Naive thymus-derived CD8-positive, alpha-beta T cell (primary cell): ENCODE measurements at regions of chr12 and their contacts with region 1.

Region 1: GRCh38 chr12:56688129-56688845 is at the start of gene PTGES3:
- DNase-seq: peak; percentile 95 to 99 (median 97)
- ATAC-seq: peak; percentile 59 to 63
- H3K4me3 Mint-ChIP-seq: peak within 1 kb of the TSS; percentile 94 to 100 (median 99)
- H3K27ac Mint-ChIP-seq: peak within 1 kb of the TSS; percentile 97 to 100 (median 98)
- H3K4me1 Mint-ChIP-seq: peaks cover 18 to 41% (median 36%) of the 10 kb centered on the region in 4 donors
- H3K27me3 Mint-ChIP-seq: peaks cover 0 to 2% (median 0%) of the 10 kb centered on the region in 5 donors
- polyA plus RNA-seq, gene PTGES3: 229 to 236 (median 234) TPM

Region 2: GRCh38 chr12:56636675-56637540 is 51.4 kb before region 1 on chr12:
- POLR2A ChIA-PET with region 1: interaction called, 218 read pairs
- DNase-seq: peak; percentile 94 to 99 (median 98)
- ATAC-seq: peak; percentile 64 to 80
- H3K4me3 Mint-ChIP-seq: peak overlapping the region; percentile 84 to 99 (median 96)
- H3K27ac Mint-ChIP-seq: peak overlapping the region; percentile 90 to 100 (median 98)
- H3K4me1 Mint-ChIP-seq: peaks cover 35 to 64% (median 54%) of the 10 kb centered on the region in 4 donors
- H3K27me3 Mint-ChIP-seq: no peaks in the 10 kb centered on the region

Region 3: GRCh38 chr12:56645717-56646446 is 42.4 kb before region 1 on chr12 and contains the start of gene ATP5F1B:
- POLR2A ChIA-PET with region 1: interaction called, 63 read pairs
- DNase-seq: peak; percentile 75 to 97 (median 89)
- ATAC-seq: peak; percentile 93 to 97
- H3K4me3 Mint-ChIP-seq: peak within 1 kb of the TSS; percentile 79 to 98 (median 95)
- H3K27ac Mint-ChIP-seq: peak within 1 kb of the TSS; percentile 90 to 100 (median 98)
- H3K4me1 Mint-ChIP-seq: peaks cover 11 to 42% (median 39%) of the 10 kb centered on the region in 4 donors
- H3K27me3 Mint-ChIP-seq: no peaks in the 10 kb centered on the region
- polyA plus RNA-seq, gene ATP5F1B: 724 to 879 (median 771) TPM

Region 4: GRCh38 chr12:56661560-56661959 is 26.7 kb before region 1 on chr12:
- POLR2A ChIA-PET with region 1: interaction called, 10 read pairs
- DNase-seq: no peak
- ATAC-seq: peak in 1 of 2 donors; percentile 33
- H3K4me3 Mint-ChIP-seq: no peak overlapping the region
- H3K27ac Mint-ChIP-seq: peak overlapping the region in 3 of 10 donors; percentile 22 to 44 (median 27)
- H3K4me1 Mint-ChIP-seq: peaks cover 0 to 2% (median under 1%) of the 10 kb centered on the region in 4 donors
- H3K27me3 Mint-ChIP-seq: no peaks in the 10 kb centered on the region

Region 5: GRCh38 chr12:56670836-56671235 is 17.5 kb before region 1 on chr12:
- POLR2A ChIA-PET with region 1: interaction called, 71 read pairs
- DNase-seq: no peak
- ATAC-seq: no peak
- H3K4me3 Mint-ChIP-seq: no peak overlapping the region
- H3K27ac Mint-ChIP-seq: peak overlapping the region in 6 of 10 donors; percentile 3 to 78 (median 41)
- H3K4me1 Mint-ChIP-seq: peaks cover 8 to 49% (median 33%) of the 10 kb centered on the region in 4 donors
- H3K27me3 Mint-ChIP-seq: no peaks in the 10 kb centered on the region

Region 6: DNA sequence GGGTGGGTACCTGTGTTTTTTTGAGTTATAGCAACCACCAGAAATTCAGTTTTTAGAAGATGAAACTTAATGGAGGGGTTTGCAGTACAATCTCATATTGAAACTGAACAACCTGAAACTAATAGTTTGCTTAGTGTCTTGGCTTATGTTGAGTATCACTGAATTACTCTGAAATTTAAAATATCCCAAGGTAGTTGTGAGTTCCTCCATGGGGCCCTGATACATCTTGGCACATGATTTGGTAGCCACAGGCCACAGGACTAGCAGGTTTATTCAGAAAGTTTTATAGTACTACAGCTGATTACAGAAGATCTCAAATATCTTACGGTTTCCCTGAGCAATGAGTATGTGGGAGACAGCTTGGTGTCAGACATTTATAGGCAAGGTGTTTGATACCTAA is 10.6 kb before region 1 on chr12:
- POLR2A ChIA-PET with region 1: interaction called, 71 read pairs
- DNase-seq: no peak
- ATAC-seq: peak; percentile 8 to 22
- H3K4me3 Mint-ChIP-seq: peak overlapping the region in 5 of 10 donors; percentile 15 to 58 (median 39)
- H3K27ac Mint-ChIP-seq: peak overlapping the region; percentile 35 to 85 (median 78)
- H3K4me1 Mint-ChIP-seq: peaks cover 20 to 77% (median 60%) of the 10 kb centered on the region in 4 donors
- H3K27me3 Mint-ChIP-seq: no peaks in the 10 kb centered on the region